PC-9 (cell line): ENCODE measurements at regions of chrX and their contacts with region 1.

Region 1: GRCh38 chrX:21963731-21964405 is 23.4 kb downstream of the SMS start:
- DNase-seq: no peak
- H3K4me3 ChIP-seq: no peak overlapping the region
- H3K27ac ChIP-seq: no peak overlapping the region
- H3K4me1 ChIP-seq: no peaks in the 10 kb centered on the region
- H3K27me3 ChIP-seq: no peaks in the 10 kb centered on the region
- CTCF ChIP-seq: no peak

Region 2: DNA sequence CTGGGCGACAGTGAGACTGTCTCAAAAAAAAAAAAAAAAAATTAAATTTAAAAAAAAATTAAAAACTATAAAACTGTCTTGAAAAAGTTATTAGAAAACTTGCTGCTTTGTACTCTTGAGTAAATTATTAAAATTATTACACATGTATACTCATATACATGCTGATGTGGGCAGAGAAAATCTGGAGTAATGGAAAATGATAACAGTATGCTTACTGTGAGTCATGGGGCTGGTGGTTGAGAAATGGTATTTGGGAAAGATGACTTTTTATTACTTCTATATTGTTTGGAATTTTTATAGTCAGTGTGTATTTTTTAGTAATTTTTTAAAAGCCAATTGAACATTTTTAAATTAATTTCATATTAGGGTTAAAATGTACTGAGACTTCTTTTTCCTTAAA is 100.6 kb before region 1 on chrX:
- CTCF ChIA-PET with region 1: no interaction called
- POLR2A ChIA-PET with region 1: interaction called, 4 read pairs
- intact Hi-C with region 1: loop called (anchors 10 kb)
- DNase-seq: no peak
- H3K4me3 ChIP-seq: no peak overlapping the region
- H3K27ac ChIP-seq: no peak overlapping the region
- H3K4me1 ChIP-seq: no peaks in the 10 kb centered on the region
- H3K27me3 ChIP-seq: no peaks in the 10 kb centered on the region
- CTCF ChIP-seq: no peak

Region 3: GRCh38 chrX:21905269-21905668 is 58.6 kb before region 1 on chrX:
- CTCF ChIA-PET with region 1: no interaction called
- POLR2A ChIA-PET with region 1: no interaction called
- intact Hi-C with region 1: no loop called
- DNase-seq: no peak
- H3K4me3 ChIP-seq: no peak overlapping the region
- H3K27ac ChIP-seq: no peak overlapping the region
- H3K4me1 ChIP-seq: no peaks in the 10 kb centered on the region
- H3K27me3 ChIP-seq: no peaks in the 10 kb centered on the region
- CTCF ChIP-seq: no peak